Testis (tissue), 5 donors: ENCODE measurements at regions of chr1 and their contacts with region 1.

Region 1: GRCh38 chr1:244796718-244797406 is 38.6 kb upstream of the COX20 start:
- DNase-seq: peak; percentile 86
- H3K4me3 ChIP-seq: no peak overlapping the region
- H3K27ac ChIP-seq: no peak overlapping the region
- H3K4me1 ChIP-seq: no peaks in the 10 kb centered on the region
- H3K27me3 ChIP-seq: no peaks in the 10 kb centered on the region
- CTCF ChIP-seq: peak; percentile 94 to 96 (median 94)
- POLR2A ChIP-seq: no peak

Region 2: DNA sequence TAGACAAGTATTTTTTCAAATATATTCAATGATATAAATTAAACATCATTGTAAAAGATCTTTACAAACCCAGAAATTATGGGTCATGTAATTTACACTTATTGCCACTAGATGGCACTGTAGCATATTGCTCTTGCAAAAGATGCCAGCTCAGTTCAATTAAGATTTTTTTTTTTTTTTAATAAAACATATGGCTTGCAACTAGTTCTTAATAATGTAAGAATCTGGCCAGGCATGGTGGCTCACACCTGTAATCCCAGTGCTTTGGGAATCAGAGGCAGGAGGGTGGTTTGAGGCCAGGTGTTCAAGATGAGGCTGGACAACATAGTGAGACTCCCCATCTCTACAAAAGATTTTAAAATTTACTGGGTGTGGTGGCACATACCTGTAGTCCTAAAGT is 193.4 kb before region 1 on chr1:
- intact Hi-C with region 1: loop called (anchors 2 kb)
- DNase-seq: no peak
- H3K4me3 ChIP-seq: no peak overlapping the region
- H3K27ac ChIP-seq: no peak overlapping the region
- H3K4me1 ChIP-seq: no peaks in the 10 kb centered on the region
- H3K27me3 ChIP-seq: no peaks in the 10 kb centered on the region
- CTCF ChIP-seq: peak; percentile 56 to 97 (median 79)
- POLR2A ChIP-seq: no peak

Region 3: GRCh38 chr1:244665771-244666217 is 131.1 kb before region 1 on chr1:
- intact Hi-C with region 1: no loop called
- DNase-seq: no peak
- H3K4me3 ChIP-seq: no peak overlapping the region
- H3K27ac ChIP-seq: no peak overlapping the region
- H3K4me1 ChIP-seq: no peaks in the 10 kb centered on the region
- H3K27me3 ChIP-seq: no peaks in the 10 kb centered on the region
- CTCF ChIP-seq: no peak
- POLR2A ChIP-seq: no peak

Region 4: GRCh38 chr1:244751271-244751895 is 45.5 kb before region 1 on chr1:
- intact Hi-C with region 1: no loop called
- DNase-seq: no peak
- H3K4me3 ChIP-seq: no peak overlapping the region
- H3K27ac ChIP-seq: no peak overlapping the region
- H3K4me1 ChIP-seq: no peaks in the 10 kb centered on the region
- H3K27me3 ChIP-seq: no peaks in the 10 kb centered on the region
- CTCF ChIP-seq: no peak
- POLR2A ChIP-seq: no peak

Region 5: GRCh38 chr1:245337829-245338484 is 541.1 kb after region 1 on chr1:
- intact Hi-C with region 1: no loop called
- DNase-seq: no peak
- H3K4me3 ChIP-seq: no peak overlapping the region
- H3K27ac ChIP-seq: no peak overlapping the region
- H3K4me1 ChIP-seq: no peaks in the 10 kb centered on the region
- H3K27me3 ChIP-seq: no peaks in the 10 kb centered on the region
- CTCF ChIP-seq: no peak
- POLR2A ChIP-seq: no peak